Posterior vena cava (tissue), 2 donors: ENCODE measurements at regions of chr14 and their contacts with region 1.

Region 1: GRCh38 chr14:48527831-48528230 is 852.4 kb upstream of the MDGA2 start:
- DNase-seq: no peak

Region 2: GRCh38 chr14:47345016-47345415 is 1182.8 kb before region 1 on chr14:
- intact Hi-C with region 1: no loop called
- DNase-seq: no peak

Region 3: GRCh38 chr14:48275301-48275700 is 252.5 kb before region 1 on chr14:
- intact Hi-C with region 1: loop called in 1 of 2 experiments (anchors 5 kb)
- DNase-seq: no peak

Region 4: DNA sequence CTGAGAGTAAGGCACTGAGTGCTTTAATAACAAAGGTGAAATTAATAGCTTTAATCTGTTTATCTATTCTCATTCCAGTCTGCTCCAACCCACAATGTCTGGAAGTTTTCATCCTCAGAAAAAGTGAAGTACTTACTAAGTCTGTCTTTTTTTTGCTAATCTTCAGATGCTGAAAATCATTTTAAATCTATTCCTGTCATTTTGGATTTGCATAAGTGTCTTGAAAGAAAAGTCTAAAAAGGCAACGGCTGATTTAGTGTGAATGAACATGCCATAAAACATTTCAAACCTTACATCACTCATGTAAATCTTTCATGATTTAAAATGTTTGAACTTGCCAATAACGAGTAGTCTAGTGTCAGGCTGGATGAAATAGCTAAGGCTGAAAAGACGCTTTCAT is 372.7 kb after region 1 on chr14:
- intact Hi-C with region 1: no loop called
- DNase-seq: no peak